MCF 10A (cell line): ENCODE measurements at regions of chr22 and their contacts with region 1.

Region 1: GRCh38 chr22:38051900-38052862 is 5.0 kb upstream of the PICK1 start:
- DNase-seq: peak; percentile 83
- H3K4me3 Mint-ChIP-seq: no peak overlapping the region
- H3K27ac Mint-ChIP-seq: no peak overlapping the region
- H3K4me1 Mint-ChIP-seq: peaks cover 5% of the 10 kb centered on the region
- H3K27me3 Mint-ChIP-seq: no peaks in the 10 kb centered on the region
- CTCF ChIP-seq: peak; percentile 93

Region 2: GRCh38 chr22:38017272-38017920 is 34.8 kb before region 1 on chr22:
- CTCF ChIA-PET with region 1: no interaction called
- POLR2A ChIA-PET with region 1: no interaction called
- intact Hi-C with region 1: no loop called
- DNase-seq: peak; percentile 66
- H3K4me3 Mint-ChIP-seq: no peak overlapping the region
- H3K27ac Mint-ChIP-seq: no peak overlapping the region
- H3K4me1 Mint-ChIP-seq: peaks cover 8% of the 10 kb centered on the region
- H3K27me3 Mint-ChIP-seq: no peaks in the 10 kb centered on the region
- CTCF ChIP-seq: no peak

Region 3: GRCh38 chr22:38041760-38042487 is 10.3 kb before region 1 on chr22:
- CTCF ChIA-PET with region 1: interaction called, 13 read pairs
- POLR2A ChIA-PET with region 1: interaction called, 4 read pairs
- intact Hi-C with region 1: no loop called
- DNase-seq: no peak
- H3K4me3 Mint-ChIP-seq: no peak overlapping the region
- H3K27ac Mint-ChIP-seq: no peak overlapping the region
- H3K4me1 Mint-ChIP-seq: no peaks in the 10 kb centered on the region
- H3K27me3 Mint-ChIP-seq: no peaks in the 10 kb centered on the region
- CTCF ChIP-seq: no peak